H1 (cell line): ENCODE measurements at regions of chr6 and their contacts with region 1.

Region 1: GRCh38 chr6:56938649-56939191 is 16.2 kb upstream of the BEND6 start:
- DNase-seq: no peak
- H3K4me3 ChIP-seq: no peak overlapping the region
- H3K27ac ChIP-seq: no peak overlapping the region
- H3K4me1 ChIP-seq: no peaks in the 10 kb centered on the region
- H3K27me3 ChIP-seq: no peaks in the 10 kb centered on the region
- CTCF ChIP-seq: no peak
- EP300 ChIP-seq: no peak
- POLR2A ChIP-seq: no peak
- RAD21 ChIP-seq: no peak

Region 2: DNA sequence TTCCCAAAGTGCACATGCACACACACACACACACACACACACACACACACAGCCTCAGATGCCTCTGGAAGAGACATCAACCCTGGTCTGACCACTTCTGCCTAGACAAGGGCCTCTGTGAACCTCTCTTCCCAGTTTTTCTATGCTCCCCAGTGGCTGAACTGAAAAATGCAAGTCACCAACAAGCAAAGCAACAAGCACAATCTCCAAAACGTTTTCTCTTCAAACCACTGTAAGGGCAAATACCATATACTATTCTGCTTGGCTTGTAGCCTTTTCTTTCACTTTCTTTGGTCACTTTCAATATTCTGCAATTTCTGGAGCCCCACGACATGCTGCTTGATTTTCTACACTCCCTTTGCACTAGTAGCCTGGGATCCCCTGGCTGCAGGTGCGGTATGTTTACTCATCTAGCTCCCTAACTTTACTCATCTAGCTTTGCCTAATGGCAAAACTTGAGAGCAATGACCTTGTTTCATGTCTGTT is 174.6 kb before region 1 on chr6:
- CTCF ChIA-PET with region 1: no interaction called
- POLR2A ChIA-PET with region 1: no interaction called
- DNase-seq: no peak
- H3K4me3 ChIP-seq: no peak overlapping the region
- H3K27ac ChIP-seq: no peak overlapping the region
- H3K4me1 ChIP-seq: peaks cover 0 to 9% (median 6%) of the 10 kb centered on the region in 4 experiments; a peak in 3 of 7 replicates
- H3K27me3 ChIP-seq: no peaks in the 10 kb centered on the region
- CTCF ChIP-seq: peak in 2 of 3 experiments; percentile 46 to 63; a peak in 2 of 4 replicates
- EP300 ChIP-seq: no peak
- POLR2A ChIP-seq: no peak
- RAD21 ChIP-seq: peak; percentile 55 to 60; a peak in 3 of 4 replicates

Region 3: DNA sequence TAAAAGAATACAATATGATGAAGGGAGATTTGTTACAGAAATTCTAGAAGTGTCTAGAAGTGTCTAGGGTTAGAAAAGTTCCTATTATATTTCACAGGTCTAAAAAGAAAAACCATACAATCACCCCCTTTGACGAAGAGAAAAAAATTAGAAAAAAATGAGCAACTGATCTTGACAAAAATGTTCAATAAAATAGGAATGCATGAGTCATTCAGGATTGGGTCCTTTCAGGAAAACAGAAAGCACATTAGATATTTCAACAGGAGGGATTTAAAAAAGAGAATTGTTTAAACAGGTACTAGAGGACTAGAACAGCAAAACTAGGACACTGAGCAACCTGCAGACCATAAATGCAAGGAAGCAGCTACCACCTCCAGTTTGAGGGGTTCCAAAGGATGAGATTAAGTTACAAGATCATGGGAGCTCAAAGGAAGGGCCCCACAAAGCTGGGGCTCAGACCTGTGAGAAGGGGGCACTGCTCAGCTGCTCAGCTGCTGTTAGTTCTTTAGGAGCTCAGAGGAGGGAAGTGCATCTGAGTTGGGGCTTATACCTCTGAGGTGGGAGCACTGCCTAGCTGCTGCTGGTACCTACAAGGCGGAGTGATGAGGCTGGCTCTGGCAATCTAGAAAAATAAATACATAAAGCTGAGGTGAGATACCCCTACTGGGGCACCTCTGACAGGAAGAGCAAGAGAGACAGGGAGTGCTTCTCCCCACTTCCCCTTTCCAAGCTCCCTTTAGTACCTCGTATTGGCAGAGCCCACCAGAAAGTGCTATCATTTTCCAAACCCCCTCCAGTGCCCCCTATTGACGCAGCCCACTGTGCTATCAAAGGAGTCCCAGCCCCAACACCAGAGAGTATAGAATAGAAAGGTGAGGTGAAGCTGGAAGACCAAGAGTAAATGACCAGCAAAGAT is 10.9 kb before region 1 on chr6:
- CTCF ChIA-PET with region 1: interaction called, 22 read pairs
- POLR2A ChIA-PET with region 1: interaction called, 3 read pairs
- DNase-seq: peak in 1 of 2 experiments; percentile 57
- H3K4me3 ChIP-seq: no peak overlapping the region; a peak in 1 of 8 replicates
- H3K27ac ChIP-seq: no peak overlapping the region
- H3K4me1 ChIP-seq: no peaks in the 10 kb centered on the region; a peak in 2 of 7 replicates
- H3K27me3 ChIP-seq: no peaks in the 10 kb centered on the region
- CTCF ChIP-seq: peak in 2 of 3 experiments; percentile 21 to 32; a peak in 3 of 4 replicates
- EP300 ChIP-seq: no peak
- POLR2A ChIP-seq: no peak
- RAD21 ChIP-seq: no peak; a peak in 1 of 4 replicates